Transverse colon (tissue), 4 donors: ENCODE measurements at regions of chr1 and their contacts with region 1.

Region 1: GRCh38 chr1:7557301-7557891 is 213.7 kb upstream of the VAMP3 start:
- DNase-seq: no peak
- H3K4me3 ChIP-seq: no peak overlapping the region
- H3K27ac ChIP-seq: no peak overlapping the region
- H3K4me1 ChIP-seq: no peaks in the 10 kb centered on the region
- H3K27me3 ChIP-seq: no peaks in the 10 kb centered on the region
- CTCF ChIP-seq: no peak
- EP300 ChIP-seq: no peak
- POLR2A ChIP-seq: no peak

Region 2: DNA sequence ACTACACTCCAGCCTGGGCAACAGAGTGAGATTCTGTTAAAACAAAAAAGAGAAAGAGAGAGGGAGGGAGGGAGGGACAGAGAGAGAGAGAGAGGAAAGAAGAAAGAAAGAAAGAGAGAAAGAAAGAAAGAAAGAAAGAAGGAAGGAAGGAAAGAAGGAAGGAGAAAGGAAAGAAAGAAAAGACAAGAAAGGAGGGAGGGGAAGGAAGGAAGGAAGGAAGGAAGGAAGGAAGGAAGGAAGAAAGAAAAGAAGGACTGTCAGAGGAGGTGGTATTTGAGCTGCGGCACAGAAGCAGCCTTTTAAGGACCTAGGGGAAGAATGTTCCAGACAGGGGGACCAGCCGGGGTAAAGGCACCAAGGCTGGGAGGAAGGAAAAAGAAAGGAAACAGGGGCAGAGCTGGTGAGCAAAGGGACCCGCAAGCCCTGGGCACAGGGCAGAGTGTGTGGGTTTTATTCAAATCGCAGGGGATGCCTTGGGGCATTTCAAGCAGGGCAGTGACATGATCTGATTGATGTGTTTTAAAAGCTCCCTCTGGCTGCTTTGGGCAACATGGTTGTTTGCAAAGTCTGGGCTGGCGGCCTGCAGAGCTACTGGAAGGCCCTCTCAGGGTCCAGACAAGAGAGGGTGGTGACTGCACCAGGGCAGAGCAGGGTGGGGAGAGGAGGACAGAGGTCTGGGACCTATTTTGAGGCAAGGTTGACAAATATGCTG is 36.8 kb after region 1 on chr1:
- in situ Hi-C with region 1: no loop called
- intact Hi-C with region 1: loop called (anchors 1 kb)
- DNase-seq: no peak
- H3K4me3 ChIP-seq: no peak overlapping the region
- H3K27ac ChIP-seq: no peak overlapping the region
- H3K4me1 ChIP-seq: no peaks in the 10 kb centered on the region
- H3K27me3 ChIP-seq: no peaks in the 10 kb centered on the region
- CTCF ChIP-seq: no peak
- EP300 ChIP-seq: no peak
- POLR2A ChIP-seq: no peak

Region 3: DNA sequence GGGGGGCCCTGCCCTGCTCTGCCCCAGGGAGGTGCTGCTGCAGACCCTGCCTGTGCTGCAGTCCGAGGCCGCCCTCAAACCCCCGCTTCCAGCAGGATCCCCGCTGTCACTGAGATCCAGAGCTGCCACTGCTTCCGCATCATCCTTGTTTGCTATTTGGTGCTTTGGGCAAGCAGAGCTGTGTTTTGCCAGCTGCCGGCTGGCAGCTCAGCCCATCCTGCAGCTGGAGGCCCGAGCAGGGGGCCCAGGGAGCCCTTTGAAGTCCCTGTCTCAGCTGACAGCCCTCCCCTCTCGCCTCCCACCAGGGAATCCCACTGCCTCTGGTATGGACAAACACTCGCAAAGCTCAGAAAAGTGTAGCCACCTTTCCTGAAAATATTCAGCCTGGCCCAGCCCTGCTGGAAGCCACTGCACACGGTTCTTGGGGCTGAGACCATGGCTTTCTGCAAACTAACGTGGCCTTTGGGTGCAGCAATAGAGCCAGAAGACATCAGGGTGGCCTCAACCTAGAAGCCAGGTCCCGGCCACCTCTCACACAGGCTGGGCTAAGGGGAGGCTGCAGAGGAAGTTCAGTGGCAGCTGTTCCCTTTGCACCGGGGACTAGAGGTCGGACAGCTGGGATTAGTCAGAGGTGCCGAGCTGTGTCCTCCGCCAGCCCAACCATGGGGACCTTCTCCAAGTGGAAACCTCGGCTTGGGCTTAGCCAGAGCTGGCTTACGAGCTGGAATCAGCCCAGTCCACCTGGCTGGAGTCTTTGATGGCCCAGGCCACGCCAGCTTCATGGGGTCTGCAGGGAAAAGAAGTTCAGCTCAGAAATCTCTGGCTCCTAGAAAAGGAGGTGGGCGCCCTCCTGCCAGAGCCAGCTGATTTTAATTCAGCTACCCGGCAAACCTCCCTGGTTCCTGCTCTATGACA is 1842.4 kb after region 1 on chr1:
- in situ Hi-C with region 1: no loop called
- intact Hi-C with region 1: no loop called
- DNase-seq: no peak
- H3K4me3 ChIP-seq: no peak overlapping the region
- H3K27ac ChIP-seq: peak overlapping the region; percentile 2 to 17 (median 16)
- H3K4me1 ChIP-seq: peaks cover 7 to 23% (median 17%) of the 10 kb centered on the region in 4 donors
- H3K27me3 ChIP-seq: no peaks in the 10 kb centered on the region
- CTCF ChIP-seq: no peak
- EP300 ChIP-seq: no peak
- POLR2A ChIP-seq: no peak